ENCODE measurements at regions of chr21 and their contacts with region 1.

Region 1: GRCh38 chr21:34061983-34062382 is 11.4 kb upstream of the MRPS6 start:
- DNase-seq: no peak

Region 2: GRCh38 chr21:33980297-33980803 is 81.6 kb before region 1 on chr21:
- in situ Hi-C with region 1: loop called (anchors 5 kb)
- DNase-seq: no peak

Region 3: DNA sequence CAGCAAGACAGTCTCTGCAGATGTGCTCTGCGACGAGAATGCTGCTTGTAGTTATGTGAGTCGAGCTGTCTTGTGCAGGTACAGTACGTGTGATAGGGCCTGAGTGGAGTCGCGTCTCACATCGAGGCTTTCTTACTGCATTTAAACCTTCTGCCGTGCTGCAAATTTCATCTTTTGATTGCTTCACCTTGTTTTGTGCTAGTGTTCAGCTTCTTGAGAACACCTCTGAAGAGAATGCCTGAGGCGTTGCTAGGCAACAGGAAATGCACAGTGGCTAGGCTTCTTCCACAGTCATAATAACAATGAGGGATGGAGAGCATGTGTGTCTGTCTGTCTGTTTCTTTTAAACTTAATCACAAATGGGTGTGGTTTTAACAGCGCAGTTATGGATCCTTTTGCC is 64.3 kb after region 1 on chr21:
- in situ Hi-C with region 1: no loop called
- DNase-seq: no peak

Region 4: GRCh38 chr21:34180407-34180806 is 118.4 kb after region 1 on chr21:
- in situ Hi-C with region 1: no loop called
- DNase-seq: no peak

Region 5: GRCh38 chr21:34276711-34277425 is 214.9 kb after region 1 on chr21:
- in situ Hi-C with region 1: no loop called
- DNase-seq: no peak

Region 6: DNA sequence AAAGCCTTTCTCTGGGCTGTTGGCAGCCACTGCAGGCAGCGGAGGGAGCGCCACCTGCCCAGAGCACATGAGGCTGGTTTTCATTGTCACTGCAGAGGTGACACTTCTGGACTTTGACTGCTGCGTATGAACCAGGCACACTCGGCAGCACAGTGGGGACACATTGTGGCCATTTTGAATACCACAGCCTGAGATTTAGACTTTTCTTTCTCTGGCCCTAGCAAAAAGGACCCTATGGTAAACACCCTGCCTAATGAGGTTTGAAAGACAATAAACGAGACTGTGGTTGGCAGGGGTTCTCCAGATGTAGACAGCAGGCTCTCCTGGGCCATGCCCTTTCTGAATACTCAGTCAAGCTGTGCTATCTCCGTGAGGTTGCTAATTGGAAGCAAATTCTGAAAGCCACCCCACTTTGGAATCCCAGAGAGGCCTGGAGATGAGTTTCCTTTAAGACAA is 289.8 kb after region 1 on chr21:
- in situ Hi-C with region 1: no loop called
- DNase-seq: peak; percentile 74